ENCODE measurements at regions of chr18 and their contacts with region 1.

Region 1: DNA sequence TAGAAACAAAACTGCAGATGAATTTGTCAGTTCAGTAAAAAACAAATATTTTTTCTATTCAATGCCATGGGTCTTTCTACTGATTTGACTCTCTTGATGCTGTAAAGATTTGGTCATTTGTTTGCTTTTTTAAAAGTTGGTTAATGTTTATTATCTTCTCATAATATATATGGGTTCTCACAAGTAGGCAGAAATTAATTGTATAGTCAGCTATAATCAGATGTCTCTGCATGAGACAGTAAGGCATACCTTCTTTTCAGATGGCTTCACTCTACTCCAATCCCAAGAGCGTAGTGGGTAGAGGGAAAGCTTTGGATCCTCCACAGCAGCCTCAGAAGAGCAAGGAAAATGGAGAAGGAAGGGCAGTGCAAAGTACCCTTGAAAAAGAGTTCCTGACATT is 1202.9 kb upstream of the CELF4 start:
- DNase-seq: no peak
- ATAC-seq: no peak
- H3K4me3 ChIP-seq: no peak overlapping the region
- H3K4me3 Mint-ChIP-seq: no peak overlapping the region
- H3K27ac ChIP-seq: no peak overlapping the region
- H3K27ac Mint-ChIP-seq: no peak overlapping the region
- H3K4me1 ChIP-seq: no peaks in the 10 kb centered on the region
- H3K4me1 Mint-ChIP-seq: no peaks in the 10 kb centered on the region
- H3K27me3 ChIP-seq: no peaks in the 10 kb centered on the region
- H3K27me3 Mint-ChIP-seq: no peaks in the 10 kb centered on the region
- CTCF ChIP-seq: no peak

Region 2: GRCh38 chr18:38718365-38718901 is 50.1 kb before region 1 on chr18:
- CTCF ChIA-PET with region 1: no interaction called
- POLR2A ChIA-PET with region 1: no interaction called
- intact Hi-C with region 1: loop called in 1 of 2 experiments (anchors 10 kb)
- DNase-seq: no peak
- ATAC-seq: no peak
- H3K4me3 ChIP-seq: no peak overlapping the region
- H3K4me3 Mint-ChIP-seq: no peak overlapping the region
- H3K27ac ChIP-seq: no peak overlapping the region
- H3K27ac Mint-ChIP-seq: no peak overlapping the region
- H3K4me1 ChIP-seq: no peaks in the 10 kb centered on the region
- H3K4me1 Mint-ChIP-seq: no peaks in the 10 kb centered on the region
- H3K27me3 ChIP-seq: no peaks in the 10 kb centered on the region
- H3K27me3 Mint-ChIP-seq: no peaks in the 10 kb centered on the region
- CTCF ChIP-seq: no peak

Region 3: DNA sequence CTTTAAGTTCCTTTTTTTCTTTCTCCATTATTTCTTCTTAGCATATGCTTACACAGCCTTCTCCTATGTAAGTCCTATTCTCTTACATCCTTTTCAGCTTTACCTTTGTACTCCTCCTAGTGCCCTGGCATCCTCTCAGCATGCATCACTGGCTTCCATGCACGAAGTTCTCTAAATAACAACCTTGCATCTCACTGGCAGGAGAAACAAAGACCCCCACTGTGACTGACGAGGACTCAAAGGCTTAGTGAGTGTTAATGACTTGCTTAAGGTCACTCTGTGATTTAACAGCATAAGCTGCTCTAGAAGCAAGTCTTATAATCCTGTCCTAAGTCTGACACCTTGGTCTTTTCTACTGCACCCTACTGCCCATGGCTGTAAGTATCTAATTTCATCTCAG is 33.1 kb after region 1 on chr18:
- CTCF ChIA-PET with region 1: no interaction called
- POLR2A ChIA-PET with region 1: no interaction called
- intact Hi-C with region 1: no loop called
- DNase-seq: no peak
- ATAC-seq: no peak
- H3K4me3 ChIP-seq: no peak overlapping the region
- H3K4me3 Mint-ChIP-seq: no peak overlapping the region
- H3K27ac ChIP-seq: no peak overlapping the region
- H3K27ac Mint-ChIP-seq: no peak overlapping the region
- H3K4me1 ChIP-seq: no peaks in the 10 kb centered on the region
- H3K4me1 Mint-ChIP-seq: no peaks in the 10 kb centered on the region
- H3K27me3 ChIP-seq: no peaks in the 10 kb centered on the region
- H3K27me3 Mint-ChIP-seq: no peaks in the 10 kb centered on the region
- CTCF ChIP-seq: no peak

Measured in CD8-positive, alpha-beta T cell (primary cell).